AG04449 (cell line): ENCODE measurements at regions of chr11 and their contacts with region 1.

Region 1: DNA sequence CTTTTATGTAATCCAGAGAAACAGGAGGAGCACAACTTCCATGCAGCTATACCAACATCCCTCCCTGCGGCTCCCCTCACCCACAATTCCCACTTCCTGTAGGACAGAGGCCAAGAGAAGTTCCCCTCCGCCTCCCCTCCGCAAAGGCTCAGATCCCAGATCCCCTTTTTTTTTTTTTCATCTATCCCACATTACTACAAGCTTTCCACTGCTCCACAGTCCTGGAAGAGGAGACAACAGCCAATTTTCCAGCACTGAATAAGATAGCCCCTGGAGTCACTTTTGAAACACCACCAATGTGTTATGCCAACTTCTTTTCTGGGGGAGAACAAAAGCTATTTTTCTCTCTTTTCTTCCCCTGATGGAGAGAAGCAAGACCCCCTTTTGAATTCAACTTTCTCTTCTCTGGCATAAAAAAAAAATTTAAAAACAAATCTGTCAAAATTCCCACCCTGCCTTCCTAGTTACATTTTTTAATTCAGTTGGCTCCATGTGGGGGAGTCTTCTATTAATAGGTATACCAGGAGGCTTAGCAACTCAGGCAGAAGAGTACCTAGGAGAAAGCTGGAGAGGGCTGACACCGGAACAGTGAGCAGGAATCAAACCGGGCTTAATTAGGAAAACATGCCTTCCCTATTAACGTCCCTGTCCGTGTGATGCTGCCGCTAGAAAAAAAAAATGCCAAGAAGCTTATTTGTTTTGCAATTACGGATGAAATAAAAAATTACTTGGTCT is 543.4 kb downstream of the BUD13 start:
- DNase-seq: no peak
- H3K4me3 ChIP-seq: no peak overlapping the region
- CTCF ChIP-seq: no peak

Region 2: DNA sequence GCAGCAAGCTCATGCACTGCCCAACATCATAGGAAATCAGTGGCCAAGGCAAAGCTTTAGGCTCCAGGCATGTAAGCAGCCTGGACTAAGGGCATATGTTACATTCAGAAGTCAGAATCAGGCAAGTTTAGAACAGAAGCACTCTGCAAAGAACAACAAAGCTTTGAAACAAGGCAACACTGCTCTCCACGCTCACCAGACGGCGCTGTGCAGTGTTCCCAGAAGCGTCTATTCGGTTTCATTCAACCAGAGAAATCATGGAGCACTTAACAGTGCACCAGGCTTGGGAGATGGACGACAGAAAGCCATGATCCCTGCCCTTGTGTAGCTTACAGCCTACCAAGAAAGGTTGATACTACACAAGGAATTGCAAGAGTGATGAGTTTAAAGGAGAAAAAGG is 12.4 kb before region 1 on chr11:
- CTCF ChIA-PET with region 1: interaction called, 24 read pairs
- POLR2A ChIA-PET with region 1: no interaction called
- DNase-seq: no peak
- H3K4me3 ChIP-seq: no peak overlapping the region
- CTCF ChIP-seq: peak; percentile 62

Region 3: DNA sequence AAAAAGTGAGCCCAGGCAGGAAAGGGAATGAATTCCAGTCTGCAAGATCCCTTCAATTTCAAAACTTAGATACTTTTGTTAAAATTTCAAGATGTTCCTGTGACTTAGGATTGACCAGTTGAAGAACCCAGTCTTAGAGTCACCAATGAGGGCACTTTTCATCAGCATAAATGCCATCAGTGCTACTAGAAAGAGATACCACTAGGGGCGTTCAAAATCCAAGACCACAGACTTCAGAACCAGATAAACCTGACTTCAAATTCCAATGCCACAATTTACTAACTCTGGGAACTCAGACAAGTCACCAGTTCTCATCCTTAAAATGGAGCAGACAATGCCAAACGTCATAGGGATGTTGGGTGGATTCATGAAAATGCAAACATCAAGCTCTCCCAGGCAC is 20.2 kb after region 1 on chr11:
- CTCF ChIA-PET with region 1: no interaction called
- POLR2A ChIA-PET with region 1: no interaction called
- DNase-seq: no peak
- H3K4me3 ChIP-seq: no peak overlapping the region
- CTCF ChIP-seq: no peak